Activated B cell treated with CpG ODN at 0.5 μM for 24 hours (primary cell): ENCODE measurements at regions of chr3 and their contacts with region 1.

Region 1: DNA sequence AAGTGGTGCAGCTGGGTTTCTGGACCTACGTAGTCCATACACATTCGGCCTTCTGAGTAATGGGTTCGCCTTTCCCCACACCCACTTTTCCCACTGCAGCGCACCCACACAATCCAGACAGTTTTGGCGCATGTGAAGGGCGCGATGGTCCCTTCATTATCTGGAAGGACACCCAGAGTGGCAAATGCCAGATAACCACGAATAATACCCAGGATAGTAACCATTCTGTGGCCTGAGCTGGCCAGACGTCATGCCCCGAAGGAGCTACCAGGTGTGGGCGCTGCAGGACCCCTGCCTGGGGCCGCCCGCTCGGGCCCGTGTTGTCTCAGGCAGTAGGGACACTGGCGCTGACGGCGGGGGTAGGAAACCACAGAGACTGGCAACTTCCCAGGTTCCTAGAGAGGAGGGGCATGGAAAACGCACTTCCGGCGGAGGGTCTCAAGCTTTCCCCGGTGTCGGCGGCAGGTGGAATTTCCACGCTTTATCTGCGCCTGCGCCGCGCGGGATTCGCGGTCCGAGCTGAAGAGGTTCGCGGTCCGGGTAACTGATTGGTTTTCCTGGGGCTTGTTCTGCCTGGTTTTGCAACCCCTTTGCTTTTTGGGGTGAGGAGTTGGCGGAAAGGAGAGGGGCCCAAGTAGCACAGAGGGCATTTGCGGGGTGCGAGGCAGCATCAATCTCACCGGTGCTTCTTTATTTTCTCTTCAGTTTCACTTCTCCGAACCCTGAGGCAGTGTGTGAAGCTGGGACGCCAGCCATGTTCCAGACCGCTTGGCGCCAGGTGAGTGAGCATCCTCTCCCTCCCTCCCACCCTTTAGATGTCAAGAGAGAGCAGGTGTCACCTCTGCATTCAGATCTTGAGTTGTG is at the start of gene ZNF620:
- DNase-seq: peak; percentile 35
- ATAC-seq: peak; percentile 83
- H3K4me3 Mint-ChIP-seq: peak within 1 kb of the TSS; percentile 96
- H3K27ac Mint-ChIP-seq: peak within 1 kb of the TSS; percentile 79
- H3K4me1 Mint-ChIP-seq: peaks cover 13% of the 10 kb centered on the region
- H3K27me3 Mint-ChIP-seq: no peaks in the 10 kb centered on the region
- CTCF ChIP-seq: no peak
- total RNA-seq, gene ZNF620: 3.6 and 4.0 TPM in 2 replicates

Region 2: DNA sequence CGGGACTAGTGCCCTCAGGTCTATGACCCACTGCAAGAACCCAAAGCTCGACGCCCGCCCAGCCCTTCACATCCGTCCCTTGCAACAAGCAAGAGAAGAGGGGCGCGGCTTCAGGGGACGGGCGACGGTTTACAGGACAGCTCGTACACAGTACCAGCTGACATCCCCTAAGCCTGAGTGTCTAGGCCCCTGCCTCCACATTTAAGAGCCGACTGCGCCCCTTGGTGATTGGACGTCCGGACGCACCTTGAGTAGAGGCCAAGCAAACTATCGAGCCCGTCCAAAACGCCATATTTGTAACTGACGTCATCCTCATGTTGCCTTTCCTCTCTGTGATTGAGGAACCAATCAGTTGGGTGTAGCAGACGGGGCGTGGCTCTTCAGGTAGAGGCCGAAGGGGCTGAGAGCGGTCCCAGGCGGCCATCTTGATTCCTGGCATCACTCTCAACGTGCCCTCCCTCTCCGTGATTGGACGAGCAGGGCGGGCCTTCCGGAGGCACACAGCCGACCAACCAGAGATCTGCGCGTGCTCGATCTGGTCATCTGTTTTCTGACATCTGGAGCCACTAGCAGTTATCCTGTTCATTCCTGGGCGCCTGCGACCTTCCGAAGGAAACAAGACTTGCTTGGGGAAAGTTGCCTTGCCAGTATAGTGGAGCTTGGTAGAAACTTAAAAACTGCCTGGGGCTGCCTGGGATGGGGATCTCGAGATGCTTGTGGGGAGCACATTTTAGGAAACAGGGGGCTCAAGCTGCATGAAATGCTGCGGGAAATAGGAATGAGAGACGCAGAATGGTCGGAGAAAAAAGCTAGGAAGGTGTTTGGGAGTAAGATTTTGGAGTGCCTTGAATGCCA is 52.7 kb before region 1 on chr3:
- CTCF ChIA-PET with region 1: interaction called, 3 read pairs
- POLR2A ChIA-PET with region 1: interaction called, 13 read pairs
- intact Hi-C with region 1: loop called (anchors 5 kb)
- DNase-seq: peak; percentile 81
- ATAC-seq: peak; percentile 92
- H3K4me3 Mint-ChIP-seq: peak overlapping the region; percentile 96
- H3K27ac Mint-ChIP-seq: peak overlapping the region; percentile 98
- H3K4me1 Mint-ChIP-seq: peaks cover 36% of the 10 kb centered on the region
- H3K27me3 Mint-ChIP-seq: no peaks in the 10 kb centered on the region
- CTCF ChIP-seq: no peak

Region 3: DNA sequence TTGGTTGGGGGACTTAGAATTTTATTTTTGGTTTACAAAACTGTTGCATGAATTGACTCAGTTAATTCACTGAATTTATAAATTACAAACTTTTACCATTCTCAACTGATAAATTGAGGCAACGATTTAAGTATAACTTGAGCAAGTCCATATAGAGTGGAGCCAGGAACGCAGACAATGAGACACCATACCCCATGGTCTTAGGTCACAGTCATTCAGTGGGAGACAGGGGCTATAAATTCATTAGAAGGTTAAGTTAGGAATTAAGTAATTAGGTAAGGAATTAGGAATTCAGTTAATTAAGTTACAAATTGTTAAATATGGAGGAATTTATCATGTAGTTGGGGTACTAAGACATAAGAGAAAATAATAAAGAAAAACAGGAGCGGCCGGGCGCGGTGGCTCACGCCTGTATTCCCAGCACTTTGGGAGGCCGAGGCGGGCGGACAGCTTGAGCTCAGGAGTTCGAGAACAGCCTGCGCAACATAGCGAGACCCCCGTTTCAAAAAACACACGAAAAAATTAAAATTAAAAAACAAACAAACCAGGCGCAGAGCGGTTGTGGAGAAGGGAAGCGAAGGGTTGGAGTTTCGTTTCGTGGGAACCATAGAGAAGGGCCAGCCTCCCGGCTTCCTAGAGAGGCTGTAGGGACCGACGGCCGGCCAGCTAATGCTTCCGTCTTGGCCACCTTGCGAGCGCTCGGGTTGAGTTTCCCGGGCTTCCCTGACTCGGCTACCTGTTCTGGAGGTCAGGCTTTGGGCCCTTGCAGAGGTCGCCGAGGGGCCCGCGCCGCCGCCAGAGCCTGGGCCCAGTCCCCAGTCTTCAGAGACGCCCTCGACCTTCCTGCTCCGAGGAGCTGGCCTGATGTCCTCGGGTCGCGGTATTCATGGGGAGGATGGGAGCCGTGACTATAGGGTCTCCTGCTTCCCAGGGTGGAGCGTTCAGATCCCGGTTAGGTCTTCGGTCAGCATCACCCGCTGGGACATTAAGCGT is 29.1 kb before region 1 on chr3 and contains the start of gene ZNF619:
- CTCF ChIA-PET with region 1: no interaction called
- POLR2A ChIA-PET with region 1: interaction called, 7 read pairs
- intact Hi-C with region 1: loop called (anchors 1 kb)
- DNase-seq: peak; percentile 64
- ATAC-seq: peak; percentile 97
- H3K4me3 Mint-ChIP-seq: peak within 1 kb of the TSS; percentile 93
- H3K27ac Mint-ChIP-seq: peak within 1 kb of the TSS; percentile 94
- H3K4me1 Mint-ChIP-seq: peaks cover 27% of the 10 kb centered on the region
- H3K27me3 Mint-ChIP-seq: no peaks in the 10 kb centered on the region
- CTCF ChIP-seq: no peak
- total RNA-seq, gene ZNF619: 14.9 and 16.7 TPM in 2 replicates

Region 4: GRCh38 chr3:41102053-41102556 is 596.3 kb after region 1 on chr3:
- CTCF ChIA-PET with region 1: no interaction called
- POLR2A ChIA-PET with region 1: no interaction called
- intact Hi-C with region 1: no loop called
- DNase-seq: no peak
- ATAC-seq: no peak
- H3K4me3 Mint-ChIP-seq: no peak overlapping the region
- H3K27ac Mint-ChIP-seq: no peak overlapping the region
- H3K4me1 Mint-ChIP-seq: peaks cover 1% of the 10 kb centered on the region
- H3K27me3 Mint-ChIP-seq: no peaks in the 10 kb centered on the region
- CTCF ChIP-seq: no peak